B cell (primary cell): ENCODE measurements at regions of chr2 and their contacts with region 1.

Region 1: GRCh38 chr2:26959331-26959730 is 11.1 kb upstream of the MAPRE3 start:
- DNase-seq: no peak
- ATAC-seq: no peak
- H3K4me3 ChIP-seq: no peak overlapping the region
- H3K4me3 Mint-ChIP-seq: no peak overlapping the region
- H3K27ac ChIP-seq: no peak overlapping the region
- H3K27ac Mint-ChIP-seq: no peak overlapping the region
- H3K4me1 ChIP-seq: no peaks in the 10 kb centered on the region
- H3K4me1 Mint-ChIP-seq: no peaks in the 10 kb centered on the region
- H3K27me3 ChIP-seq: peaks cover 0 to 16% (median 4%) of the 10 kb centered on the region in 4 experiments
- H3K27me3 Mint-ChIP-seq: peaks cover 37% of the 10 kb centered on the region
- CTCF ChIP-seq: no peak

Region 2: DNA sequence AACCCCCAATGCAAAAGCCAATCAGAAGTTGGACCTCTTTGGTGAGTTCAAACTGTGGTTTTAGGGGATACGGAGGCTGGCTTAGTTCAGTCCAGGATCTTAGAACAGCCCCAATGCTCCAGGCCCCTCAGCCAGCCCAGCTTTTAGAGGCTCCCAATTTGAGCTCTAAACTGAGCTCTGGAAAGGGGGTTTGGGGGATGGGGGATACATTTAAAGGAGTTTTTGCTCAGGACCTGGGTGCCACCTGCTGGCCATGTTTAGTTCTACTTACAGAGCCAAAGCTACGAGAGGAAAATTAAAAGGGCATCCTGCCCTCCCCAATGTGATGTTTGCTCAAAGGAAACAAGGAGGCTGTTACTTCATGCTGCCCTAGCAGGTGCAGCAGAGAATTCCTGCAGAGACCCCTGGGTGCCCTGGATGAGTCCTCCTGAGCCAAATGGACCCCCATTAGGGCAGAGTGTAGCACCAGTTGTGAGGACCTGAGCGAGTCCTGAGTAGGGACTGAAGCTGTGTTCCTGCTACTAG is 57.5 kb after region 1 on chr2:
- CTCF ChIA-PET with region 1: interaction called, 145 read pairs
- POLR2A ChIA-PET with region 1: no interaction called
- intact Hi-C with region 1: loop called (anchors 1 kb)
- DNase-seq: peak; percentile 63
- ATAC-seq: peak; percentile 57
- H3K4me3 ChIP-seq: no peak overlapping the region
- H3K4me3 Mint-ChIP-seq: no peak overlapping the region
- H3K27ac ChIP-seq: no peak overlapping the region
- H3K27ac Mint-ChIP-seq: no peak overlapping the region
- H3K4me1 ChIP-seq: no peaks in the 10 kb centered on the region
- H3K4me1 Mint-ChIP-seq: no peaks in the 10 kb centered on the region
- H3K27me3 ChIP-seq: no peaks in the 10 kb centered on the region
- H3K27me3 Mint-ChIP-seq: no peaks in the 10 kb centered on the region
- CTCF ChIP-seq: peak; percentile 71

Region 3: DNA sequence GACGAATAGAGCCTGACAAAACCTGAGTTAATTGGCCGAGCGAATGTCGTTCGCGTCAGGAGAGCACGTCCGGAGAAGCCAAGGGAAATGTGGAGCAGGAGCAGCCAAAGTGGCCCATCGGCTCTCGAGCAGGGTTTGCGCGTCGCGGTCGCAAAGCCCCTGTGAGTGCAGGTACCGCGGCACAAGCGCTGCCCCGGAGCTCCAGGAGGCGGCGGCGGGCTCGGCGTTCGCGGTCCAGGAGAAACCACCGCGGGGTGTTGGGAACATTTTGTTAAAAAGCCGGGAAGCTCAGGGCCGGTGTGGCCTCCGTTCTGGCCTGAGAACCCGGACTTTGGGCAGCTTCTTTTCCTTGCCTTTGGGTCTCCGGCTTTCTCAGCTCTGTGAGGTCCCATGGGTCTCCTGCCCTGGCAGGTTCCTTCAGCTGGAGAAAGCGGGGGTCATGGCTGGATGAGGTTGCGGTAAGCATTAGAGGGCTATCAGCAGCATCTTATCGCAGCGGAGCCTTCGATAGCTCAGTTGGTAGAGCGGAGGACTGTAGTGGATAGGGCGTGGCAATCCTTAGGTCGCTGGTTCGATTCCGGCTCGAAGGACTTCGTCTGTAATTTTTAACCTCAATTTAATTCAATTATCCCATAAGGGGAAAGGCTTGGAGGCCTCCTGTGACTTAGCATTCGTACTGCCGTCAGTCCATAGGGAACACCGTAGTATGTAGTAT is 91.1 kb after region 1 on chr2:
- CTCF ChIA-PET with region 1: interaction called, 14 read pairs
- POLR2A ChIA-PET with region 1: no interaction called
- intact Hi-C with region 1: no loop called
- DNase-seq: peak; percentile 98
- ATAC-seq: peak; percentile 60
- H3K4me3 ChIP-seq: peak overlapping the region; percentile 57 to 94 (median 81)
- H3K4me3 Mint-ChIP-seq: peak overlapping the region; percentile 95
- H3K27ac ChIP-seq: peak overlapping the region; percentile 72 to 80
- H3K27ac Mint-ChIP-seq: peak overlapping the region; percentile 100
- H3K4me1 ChIP-seq: peaks cover 4 to 15% of the 10 kb centered on the region in 2 donors
- H3K4me1 Mint-ChIP-seq: peaks cover 17% of the 10 kb centered on the region
- H3K27me3 ChIP-seq: no peaks in the 10 kb centered on the region
- H3K27me3 Mint-ChIP-seq: peaks cover 7% of the 10 kb centered on the region
- CTCF ChIP-seq: peak; percentile 50

Region 4: DNA sequence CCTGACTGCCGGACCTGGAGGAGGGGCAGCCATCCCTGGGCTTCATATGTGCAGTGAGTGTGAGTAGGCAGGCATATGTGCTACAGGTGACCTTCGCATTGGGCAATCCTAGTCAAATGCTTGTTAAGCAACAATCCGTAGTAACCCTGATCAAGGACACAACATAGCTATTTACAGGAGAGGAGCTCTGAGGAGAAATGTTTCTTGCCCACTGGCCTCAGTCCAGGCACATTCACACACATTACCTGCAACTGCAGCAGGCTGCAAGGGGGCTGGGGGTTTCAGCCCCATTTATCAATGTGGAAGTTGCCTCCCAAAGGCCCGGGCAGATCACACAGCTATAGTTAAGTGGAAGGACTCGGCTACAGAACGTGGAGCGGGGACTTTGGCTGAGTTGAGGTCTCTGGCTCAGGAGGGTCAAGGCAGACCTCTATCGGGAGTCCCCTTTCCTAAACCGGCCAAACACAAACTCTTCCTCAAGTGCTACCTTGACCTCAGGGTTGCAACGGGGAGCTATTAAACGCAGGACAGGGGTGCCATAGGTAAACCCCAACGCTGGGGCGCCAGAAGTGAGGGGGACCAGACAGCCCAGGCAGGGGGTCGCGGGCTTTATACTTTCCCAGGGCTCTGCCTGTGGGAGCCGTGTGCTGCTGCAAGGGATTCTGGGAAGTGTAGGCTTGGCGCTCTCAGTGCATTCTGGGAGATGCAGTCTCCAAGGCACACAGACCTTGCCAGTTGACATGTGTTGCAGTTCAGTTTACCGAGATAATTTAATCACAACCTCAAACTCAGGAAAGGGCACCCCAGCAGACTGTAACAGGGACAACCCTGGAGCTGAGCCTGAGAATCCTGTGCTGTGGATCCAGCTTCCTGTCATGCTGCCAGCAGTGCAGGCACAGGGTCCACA is 136.7 kb after region 1 on chr2:
- CTCF ChIA-PET with region 1: interaction called, 31 read pairs
- POLR2A ChIA-PET with region 1: no interaction called
- intact Hi-C with region 1: no loop called
- DNase-seq: peak; percentile 67
- ATAC-seq: peak; percentile 90
- H3K4me3 ChIP-seq: peak overlapping the region in 3 of 5 experiments; percentile 38 to 55 (median 48)
- H3K4me3 Mint-ChIP-seq: peak overlapping the region; percentile 81
- H3K27ac ChIP-seq: no peak overlapping the region
- H3K27ac Mint-ChIP-seq: peak overlapping the region; percentile 41
- H3K4me1 ChIP-seq: peaks cover 6 to 9% of the 10 kb centered on the region in 2 donors
- H3K4me1 Mint-ChIP-seq: peaks cover 11% of the 10 kb centered on the region
- H3K27me3 ChIP-seq: no peaks in the 10 kb centered on the region
- H3K27me3 Mint-ChIP-seq: no peaks in the 10 kb centered on the region
- CTCF ChIP-seq: no peak

Region 5: GRCh38 chr2:27281855-27282559 is 322.7 kb after region 1 on chr2 and contains the start of gene TRIM54:
- CTCF ChIA-PET with region 1: interaction called, 168 read pairs
- POLR2A ChIA-PET with region 1: interaction called, 3 read pairs
- intact Hi-C with region 1: loop called (anchors 1 kb)
- DNase-seq: no peak
- ATAC-seq: no peak
- H3K4me3 ChIP-seq: no peak within 1 kb of the TSS
- H3K4me3 Mint-ChIP-seq: no peak within 1 kb of the TSS
- H3K27ac ChIP-seq: no peak within 1 kb of the TSS
- H3K27ac Mint-ChIP-seq: no peak within 1 kb of the TSS
- H3K4me1 ChIP-seq: no peaks in the 10 kb centered on the region
- H3K4me1 Mint-ChIP-seq: peaks cover 5% of the 10 kb centered on the region
- H3K27me3 ChIP-seq: peaks cover 0 to 9% (median 0%) of the 10 kb centered on the region in 4 experiments
- H3K27me3 Mint-ChIP-seq: peaks cover 40% of the 10 kb centered on the region
- CTCF ChIP-seq: no peak
- total RNA-seq, gene TRIM54: not detected in 2 replicates